ENCODE measurements at regions of chr7 and their contacts with region 1.

Region 1: GRCh38 chr7:104923010-104923421 is 91.0 kb upstream of the KMT2E start:
- DNase-seq: peak; percentile 87 to 88
- ATAC-seq: peak; percentile 80

Region 2: DNA sequence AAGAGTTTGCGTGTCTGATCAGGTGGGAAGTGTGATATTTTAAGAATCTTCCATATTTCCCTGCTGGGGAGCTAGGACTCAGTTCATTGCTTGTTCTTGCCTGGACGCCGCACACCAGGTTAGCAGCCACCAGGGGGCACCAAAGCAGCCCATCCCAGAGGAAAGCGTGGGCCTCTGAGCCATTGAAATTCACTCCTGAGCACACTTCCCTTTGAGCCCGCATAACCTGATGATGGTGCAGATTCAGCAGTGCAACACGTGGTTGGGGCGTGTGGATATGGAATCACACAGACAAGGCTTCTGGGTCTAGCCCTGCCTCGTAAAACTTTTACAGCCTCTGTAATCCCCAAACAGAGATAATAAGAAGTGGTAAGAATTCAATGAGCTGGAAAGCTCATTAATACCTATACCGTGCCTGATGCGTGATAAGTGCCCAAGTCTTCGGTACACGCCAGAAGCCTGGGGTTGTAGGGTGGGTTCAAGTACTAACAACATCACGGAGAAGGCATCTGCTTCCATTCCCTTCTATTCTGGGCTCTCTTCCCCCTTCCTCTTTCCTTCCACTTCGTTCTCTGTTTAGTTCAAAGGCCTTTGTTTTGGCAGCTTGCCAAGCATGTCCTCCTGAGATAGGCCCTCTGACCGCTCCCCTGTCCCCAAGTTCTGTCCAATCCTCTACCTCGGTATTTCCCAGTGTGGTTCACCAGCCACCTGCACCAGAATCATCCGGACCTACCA is 39.1 kb before region 1 on chr7:
- intact Hi-C with region 1: loop called in 1 of 2 experiments (anchors 5 kb)
- DNase-seq: peak; percentile 95 to 96
- ATAC-seq: peak; percentile 98

Measured in left colon (tissue), 2 donors.